A673 (cell line): ENCODE measurements at regions of chr11 and their contacts with region 1.

Region 1: GRCh38 chr11:88543902-88544655 is 206.5 kb upstream of the CTSC start:
- DNase-seq: peak; percentile 92
- H3K4me3 ChIP-seq: no peak overlapping the region
- H3K27ac ChIP-seq: no peak overlapping the region
- H3K4me1 ChIP-seq: no peaks in the 10 kb centered on the region
- H3K27me3 ChIP-seq: peaks cover 5% of the 10 kb centered on the region
- CTCF ChIP-seq: peak; percentile 96

Region 2: DNA sequence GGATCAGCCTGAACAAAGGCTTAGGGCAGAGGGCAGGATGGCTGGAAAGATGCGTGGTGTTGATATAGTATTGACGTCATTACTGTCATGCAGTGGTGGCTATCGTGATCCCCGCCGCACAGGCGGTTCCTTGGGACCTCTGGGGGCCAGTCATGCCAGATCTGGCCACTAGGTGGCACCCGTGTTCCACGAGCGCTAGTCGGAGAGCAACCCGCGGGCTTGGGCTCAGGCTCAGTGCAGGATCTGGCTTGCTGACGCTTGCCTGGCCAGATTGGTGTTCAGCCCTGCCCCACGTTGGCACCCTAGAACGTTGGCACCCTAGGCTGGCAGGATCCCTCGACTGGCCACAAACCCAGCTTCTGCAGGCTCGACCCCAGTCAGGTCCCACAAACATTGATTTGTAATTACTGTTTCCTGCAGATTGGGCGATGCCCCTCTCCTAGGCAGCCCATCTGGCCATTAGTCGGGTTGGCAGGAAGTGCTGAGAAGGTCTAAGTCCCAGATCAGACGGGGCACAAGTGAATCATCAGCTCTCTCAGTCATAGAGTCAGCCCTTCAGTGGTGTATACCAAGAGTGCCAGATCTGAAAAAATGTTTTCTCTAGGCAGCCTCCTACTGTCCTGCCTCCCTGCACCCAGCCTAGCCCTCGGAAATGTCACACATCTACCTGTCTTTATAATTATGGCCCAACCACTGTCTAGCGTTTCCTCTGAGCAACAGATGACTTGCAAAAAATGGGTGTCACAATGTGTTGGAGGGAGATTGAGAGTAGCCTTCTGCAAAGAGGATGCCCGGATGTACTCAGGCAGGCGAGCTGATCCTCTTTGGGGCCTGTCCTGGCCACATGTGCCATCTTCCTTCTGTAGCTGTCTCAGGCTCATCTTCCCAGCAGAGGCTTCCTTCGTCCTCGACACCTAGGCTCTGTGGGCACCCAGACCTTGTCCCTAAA is 1191.0 kb before region 1 on chr11:
- CTCF ChIA-PET with region 1: no interaction called
- POLR2A ChIA-PET with region 1: no interaction called
- intact Hi-C with region 1: loop called (anchors 5 kb)
- DNase-seq: peak; percentile 92
- H3K4me3 ChIP-seq: no peak overlapping the region
- H3K27ac ChIP-seq: no peak overlapping the region
- H3K4me1 ChIP-seq: no peaks in the 10 kb centered on the region
- H3K27me3 ChIP-seq: no peaks in the 10 kb centered on the region
- CTCF ChIP-seq: peak; percentile 100

Region 3: DNA sequence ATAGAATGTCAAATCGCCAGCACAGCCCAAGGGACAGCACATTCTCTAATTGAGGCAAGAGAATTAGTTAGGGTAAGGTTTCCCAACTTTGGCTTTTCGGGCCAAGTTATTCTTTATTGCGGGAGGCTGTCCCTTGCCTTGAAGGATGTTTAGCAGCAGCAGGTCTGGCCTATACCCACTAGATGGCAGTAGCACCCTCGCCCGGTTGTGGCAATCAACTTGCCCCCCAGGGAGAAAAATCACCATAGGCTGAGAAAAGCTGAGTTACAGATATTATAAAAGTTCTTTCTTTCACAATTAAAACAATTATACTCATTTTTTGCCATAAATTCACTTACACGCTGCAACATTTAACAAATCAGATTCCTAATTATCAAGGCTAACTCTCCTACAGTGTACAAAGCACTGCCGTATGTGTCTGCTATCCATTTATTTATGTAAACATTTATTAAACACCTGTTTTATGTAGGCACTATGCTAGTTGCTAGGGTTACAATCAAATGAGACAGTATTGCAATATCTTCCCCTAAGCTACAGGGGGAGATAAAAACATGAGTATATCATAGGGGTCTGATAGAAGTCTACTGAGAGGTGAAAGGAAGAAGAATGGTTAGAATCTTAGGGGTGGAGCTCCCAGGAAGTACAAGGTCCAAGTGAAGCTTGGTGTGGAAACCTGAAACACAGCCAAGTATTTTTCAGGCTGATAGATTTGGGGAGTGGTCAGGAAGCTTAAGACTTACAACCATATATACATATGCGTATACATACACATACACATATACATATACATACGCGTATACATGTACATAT is 821.1 kb before region 1 on chr11:
- CTCF ChIA-PET with region 1: no interaction called
- POLR2A ChIA-PET with region 1: no interaction called
- intact Hi-C with region 1: loop called (anchors 5 kb)
- DNase-seq: peak; percentile 68
- H3K4me3 ChIP-seq: no peak overlapping the region
- H3K27ac ChIP-seq: no peak overlapping the region
- H3K4me1 ChIP-seq: no peaks in the 10 kb centered on the region
- H3K27me3 ChIP-seq: peaks cover 24% of the 10 kb centered on the region
- CTCF ChIP-seq: peak; percentile 95

Region 4: DNA sequence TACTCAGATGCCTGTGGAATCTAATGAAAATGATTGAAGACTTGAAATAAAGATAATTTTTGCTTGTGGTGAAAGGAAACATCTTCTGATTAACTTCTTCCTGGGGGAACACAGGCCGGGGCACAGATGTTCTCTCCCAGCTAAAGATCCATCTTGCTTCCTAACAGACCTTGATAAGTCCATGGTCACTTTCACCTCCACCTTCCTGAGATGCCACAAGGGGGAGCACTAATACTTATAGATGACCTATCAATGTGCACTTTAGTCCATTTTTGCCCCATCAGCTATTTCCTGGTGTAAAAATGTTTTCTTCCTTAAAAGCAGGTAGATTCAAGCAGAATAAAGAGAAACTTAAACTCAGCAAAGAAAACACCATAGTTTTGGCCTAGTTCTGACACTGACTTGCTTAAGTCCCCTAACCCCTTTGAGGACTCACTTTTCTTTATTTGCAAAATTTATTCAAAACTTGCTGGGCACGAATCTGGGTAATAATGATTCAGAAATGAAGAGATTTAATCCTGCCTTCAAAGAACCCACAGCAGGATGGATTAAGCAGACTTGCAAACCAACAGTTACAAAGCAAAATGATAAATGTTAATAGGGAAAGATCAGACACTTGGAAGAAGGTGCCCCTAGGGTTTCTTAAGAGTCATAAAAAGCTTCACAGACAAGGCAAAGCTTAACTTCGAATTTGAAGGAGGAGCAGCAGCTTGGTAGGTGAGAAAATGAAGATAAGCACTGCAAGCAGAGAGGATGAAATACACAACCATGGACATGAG is 527.5 kb before region 1 on chr11:
- CTCF ChIA-PET with region 1: interaction called, 12 read pairs
- POLR2A ChIA-PET with region 1: no interaction called
- intact Hi-C with region 1: loop called (anchors 1 kb)
- DNase-seq: peak; percentile 78
- H3K4me3 ChIP-seq: no peak overlapping the region
- H3K27ac ChIP-seq: no peak overlapping the region
- H3K4me1 ChIP-seq: no peaks in the 10 kb centered on the region
- H3K27me3 ChIP-seq: no peaks in the 10 kb centered on the region
- CTCF ChIP-seq: peak; percentile 79

Region 5: GRCh38 chr11:88169471-88169870 is 374.6 kb before region 1 on chr11:
- CTCF ChIA-PET with region 1: interaction called, 4 read pairs
- POLR2A ChIA-PET with region 1: no interaction called
- intact Hi-C with region 1: loop called (anchors 5 kb)
- DNase-seq: no peak
- H3K4me3 ChIP-seq: no peak overlapping the region
- H3K27ac ChIP-seq: no peak overlapping the region
- H3K4me1 ChIP-seq: no peaks in the 10 kb centered on the region
- H3K27me3 ChIP-seq: no peaks in the 10 kb centered on the region
- CTCF ChIP-seq: no peak

Region 6: DNA sequence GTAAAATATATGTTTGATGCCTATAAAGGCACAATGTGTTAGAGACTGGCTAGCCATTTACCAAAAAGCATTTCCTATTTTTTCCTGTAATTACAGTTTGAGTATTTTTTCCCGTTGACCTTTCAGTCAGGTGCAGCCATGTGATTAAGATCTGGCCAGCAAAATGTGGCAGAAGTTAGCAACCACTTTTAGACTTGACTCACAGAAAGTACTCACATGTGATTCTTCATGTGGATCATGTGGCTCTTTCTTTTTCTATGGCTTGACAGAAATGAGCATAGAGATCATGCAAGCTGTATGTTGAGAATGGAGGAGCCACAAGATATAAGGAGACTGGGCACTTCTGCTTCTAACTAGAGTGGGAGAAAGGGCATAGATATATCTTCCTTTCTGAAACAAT is 341.6 kb before region 1 on chr11:
- CTCF ChIA-PET with region 1: no interaction called
- POLR2A ChIA-PET with region 1: no interaction called
- intact Hi-C with region 1: no loop called
- DNase-seq: no peak
- H3K4me3 ChIP-seq: no peak overlapping the region
- H3K27ac ChIP-seq: no peak overlapping the region
- H3K4me1 ChIP-seq: no peaks in the 10 kb centered on the region
- H3K27me3 ChIP-seq: no peaks in the 10 kb centered on the region
- CTCF ChIP-seq: no peak

Region 7: GRCh38 chr11:88327061-88327460 is 217.0 kb before region 1 on chr11:
- CTCF ChIA-PET with region 1: no interaction called
- POLR2A ChIA-PET with region 1: no interaction called
- intact Hi-C with region 1: loop called (anchors 5 kb)
- DNase-seq: no peak
- H3K4me3 ChIP-seq: no peak overlapping the region
- H3K27ac ChIP-seq: no peak overlapping the region
- H3K4me1 ChIP-seq: peaks cover 50% of the 10 kb centered on the region
- H3K27me3 ChIP-seq: no peaks in the 10 kb centered on the region
- CTCF ChIP-seq: no peak

Region 8: GRCh38 chr11:88531831-88532230 is 12.2 kb before region 1 on chr11:
- CTCF ChIA-PET with region 1: no interaction called
- POLR2A ChIA-PET with region 1: no interaction called
- intact Hi-C with region 1: no loop called
- DNase-seq: no peak
- H3K4me3 ChIP-seq: no peak overlapping the region
- H3K27ac ChIP-seq: no peak overlapping the region
- H3K4me1 ChIP-seq: peaks cover 3% of the 10 kb centered on the region
- H3K27me3 ChIP-seq: no peaks in the 10 kb centered on the region
- CTCF ChIP-seq: no peak

Region 9: GRCh38 chr11:88704485-88704884 is 160.4 kb after region 1 on chr11:
- CTCF ChIA-PET with region 1: no interaction called
- POLR2A ChIA-PET with region 1: no interaction called
- intact Hi-C with region 1: no loop called
- DNase-seq: no peak
- H3K4me3 ChIP-seq: no peak overlapping the region
- H3K27ac ChIP-seq: no peak overlapping the region
- H3K4me1 ChIP-seq: no peaks in the 10 kb centered on the region
- H3K27me3 ChIP-seq: no peaks in the 10 kb centered on the region
- CTCF ChIP-seq: no peak

Region 10: DNA sequence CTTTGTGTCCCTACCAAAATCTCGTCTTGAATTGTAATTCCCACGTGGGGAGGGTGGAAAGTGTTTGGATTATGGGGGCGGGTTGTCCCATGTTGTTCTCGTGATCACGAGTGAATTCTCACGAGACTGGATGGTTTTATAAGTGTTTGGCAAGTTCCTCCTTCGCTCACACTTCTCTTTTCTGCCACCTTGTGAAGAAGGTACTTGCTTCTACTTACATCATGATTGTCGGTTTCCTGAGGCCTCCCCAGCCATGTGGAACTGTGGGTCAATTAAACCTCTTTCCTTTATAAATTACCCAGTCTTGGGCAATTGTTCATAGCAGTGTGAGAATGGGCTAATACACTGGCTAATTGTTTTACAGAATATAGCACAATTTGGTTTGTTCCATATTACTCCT is 195.4 kb after region 1 on chr11:
- CTCF ChIA-PET with region 1: no interaction called
- POLR2A ChIA-PET with region 1: no interaction called
- intact Hi-C with region 1: no loop called
- DNase-seq: no peak
- H3K4me3 ChIP-seq: no peak overlapping the region
- H3K27ac ChIP-seq: no peak overlapping the region
- H3K4me1 ChIP-seq: no peaks in the 10 kb centered on the region
- H3K27me3 ChIP-seq: no peaks in the 10 kb centered on the region
- CTCF ChIP-seq: no peak

Region 11: GRCh38 chr11:89613911-89614310 is 1069.8 kb after region 1 on chr11:
- CTCF ChIA-PET with region 1: no interaction called
- POLR2A ChIA-PET with region 1: no interaction called
- intact Hi-C with region 1: loop called (anchors 10 kb)
- DNase-seq: no peak
- H3K4me3 ChIP-seq: no peak overlapping the region
- H3K27ac ChIP-seq: no peak overlapping the region
- H3K4me1 ChIP-seq: no peaks in the 10 kb centered on the region
- H3K27me3 ChIP-seq: no peaks in the 10 kb centered on the region
- CTCF ChIP-seq: no peak